Activated CD4-positive, alpha-beta memory T cell treated with anti-CD3 and anti-CD28 coated beads for 36 hours (primary cell): ENCODE measurements at regions of chr5 and their contacts with region 1.

Region 1: DNA sequence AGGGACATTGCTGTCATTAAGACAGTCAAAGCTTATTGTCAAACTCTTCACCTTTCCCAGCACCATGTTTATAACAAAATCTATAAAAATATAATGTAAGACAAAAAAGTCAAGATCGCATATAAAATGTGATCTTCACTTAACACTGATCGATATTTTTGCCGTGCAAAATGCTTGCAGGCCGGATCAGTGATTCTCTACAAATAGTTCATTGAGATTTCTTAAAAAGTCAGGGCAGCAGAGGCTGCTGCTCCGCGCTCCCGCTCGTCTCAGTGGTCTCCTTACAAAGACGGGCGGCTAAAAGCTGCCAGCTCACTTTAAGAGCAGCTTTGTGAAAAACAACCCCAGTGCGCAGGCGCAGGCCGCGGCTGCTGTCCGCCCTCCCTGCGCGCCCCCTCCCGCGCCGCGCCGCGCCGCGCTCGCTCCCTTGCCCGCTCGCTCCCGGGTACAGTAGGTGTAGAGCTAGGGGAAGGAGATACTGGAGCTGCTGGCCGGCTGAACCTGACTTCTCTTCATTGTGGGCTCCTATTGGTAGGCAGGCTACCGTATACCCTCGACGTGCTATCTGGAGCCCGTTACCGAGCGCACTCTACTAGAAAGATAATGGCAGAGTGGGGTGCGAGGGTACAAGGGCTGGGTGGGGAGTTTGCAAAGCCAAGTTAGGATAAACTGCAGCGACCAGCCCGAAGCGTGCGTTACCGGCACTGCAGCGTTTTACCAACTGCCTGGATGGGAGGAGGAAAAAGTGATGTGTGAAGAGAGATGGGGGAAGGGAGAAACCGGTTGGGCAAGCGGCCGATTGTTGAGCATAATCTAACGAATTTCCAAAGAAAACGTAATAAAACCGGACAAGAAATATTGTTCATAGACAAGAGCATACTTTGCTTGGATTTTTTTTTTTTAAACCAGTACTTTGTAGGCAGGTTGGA is at the start of gene ARRDC3:
- DNase-seq: peak; percentile 98
- H3K4me3 Mint-ChIP-seq: peak within 1 kb of the TSS; percentile 86
- H3K27ac Mint-ChIP-seq: peak within 1 kb of the TSS; percentile 100
- H3K4me1 Mint-ChIP-seq: peaks cover 17% of the 10 kb centered on the region
- H3K27me3 Mint-ChIP-seq: no peaks in the 10 kb centered on the region
- total RNA-seq, gene ARRDC3: 17.9 to 19.0 TPM

Region 2: GRCh38 chr5:90866333-90866732 is 517.0 kb before region 1 on chr5:
- CTCF ChIA-PET with region 1: interaction called, 43 read pairs
- POLR2A ChIA-PET with region 1: interaction called, 5 read pairs
- intact Hi-C with region 1: loop called (anchors 1 kb)
- DNase-seq: no peak
- H3K4me3 Mint-ChIP-seq: no peak overlapping the region
- H3K27ac Mint-ChIP-seq: no peak overlapping the region
- H3K4me1 Mint-ChIP-seq: peaks cover 6% of the 10 kb centered on the region
- H3K27me3 Mint-ChIP-seq: peaks cover 14% of the 10 kb centered on the region

Region 3: DNA sequence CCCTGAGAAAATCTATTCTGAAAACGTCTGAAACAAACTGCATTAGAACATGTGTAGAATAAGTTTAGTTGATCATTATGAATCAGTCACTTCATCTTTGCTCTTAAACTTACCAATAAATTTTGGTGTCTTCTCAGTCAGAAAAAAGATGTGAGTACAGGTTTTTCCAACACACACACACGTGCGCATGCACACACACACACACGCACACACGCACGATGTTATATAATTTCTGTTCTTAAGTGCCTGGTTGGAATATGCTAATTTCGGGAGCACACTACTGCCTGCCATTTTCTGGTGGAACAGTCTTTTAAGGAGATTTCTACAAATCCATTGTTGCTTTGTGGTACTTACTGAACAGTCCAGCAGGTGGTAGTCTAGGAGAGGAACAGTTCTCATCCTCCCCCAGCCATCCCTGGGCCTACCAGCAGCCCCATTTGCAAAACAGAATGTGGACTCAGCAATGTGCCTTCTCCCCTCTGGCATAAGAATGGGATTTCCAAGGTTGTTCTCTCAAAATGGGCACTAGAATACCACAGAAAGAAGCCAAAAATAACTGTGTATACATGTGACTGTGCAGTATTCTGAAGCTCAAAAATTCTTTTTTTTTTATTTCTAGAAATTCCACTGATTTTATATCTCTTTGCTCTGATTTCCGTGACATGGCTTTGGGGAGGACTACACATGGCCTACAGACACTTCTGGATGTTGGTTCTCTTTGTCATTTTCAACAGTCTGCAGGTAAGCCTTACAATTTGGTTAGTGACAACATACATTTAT is 281.5 kb before region 1 on chr5:
- CTCF ChIA-PET with region 1: interaction called, 55 read pairs
- POLR2A ChIA-PET with region 1: no interaction called
- intact Hi-C with region 1: loop called (anchors 1 kb)
- DNase-seq: peak; percentile 61
- H3K4me3 Mint-ChIP-seq: no peak overlapping the region
- H3K27ac Mint-ChIP-seq: no peak overlapping the region
- H3K4me1 Mint-ChIP-seq: no peaks in the 10 kb centered on the region
- H3K27me3 Mint-ChIP-seq: peaks cover 2% of the 10 kb centered on the region

Region 4: GRCh38 chr5:91219803-91220371 is 163.4 kb before region 1 on chr5:
- CTCF ChIA-PET with region 1: interaction called, 226 read pairs
- POLR2A ChIA-PET with region 1: interaction called, 6 read pairs
- intact Hi-C with region 1: loop called (anchors 1 kb)
- DNase-seq: peak; percentile 50
- H3K4me3 Mint-ChIP-seq: no peak overlapping the region
- H3K27ac Mint-ChIP-seq: no peak overlapping the region
- H3K4me1 Mint-ChIP-seq: no peaks in the 10 kb centered on the region
- H3K27me3 Mint-ChIP-seq: peaks cover 2% of the 10 kb centered on the region

Region 5: GRCh38 chr5:91260707-91261106 is 122.6 kb before region 1 on chr5:
- CTCF ChIA-PET with region 1: interaction called, 10 read pairs
- POLR2A ChIA-PET with region 1: no interaction called
- intact Hi-C with region 1: loop called (anchors 5 kb)
- DNase-seq: no peak
- H3K4me3 Mint-ChIP-seq: no peak overlapping the region
- H3K27ac Mint-ChIP-seq: no peak overlapping the region
- H3K4me1 Mint-ChIP-seq: no peaks in the 10 kb centered on the region
- H3K27me3 Mint-ChIP-seq: no peaks in the 10 kb centered on the region

Region 6: DNA sequence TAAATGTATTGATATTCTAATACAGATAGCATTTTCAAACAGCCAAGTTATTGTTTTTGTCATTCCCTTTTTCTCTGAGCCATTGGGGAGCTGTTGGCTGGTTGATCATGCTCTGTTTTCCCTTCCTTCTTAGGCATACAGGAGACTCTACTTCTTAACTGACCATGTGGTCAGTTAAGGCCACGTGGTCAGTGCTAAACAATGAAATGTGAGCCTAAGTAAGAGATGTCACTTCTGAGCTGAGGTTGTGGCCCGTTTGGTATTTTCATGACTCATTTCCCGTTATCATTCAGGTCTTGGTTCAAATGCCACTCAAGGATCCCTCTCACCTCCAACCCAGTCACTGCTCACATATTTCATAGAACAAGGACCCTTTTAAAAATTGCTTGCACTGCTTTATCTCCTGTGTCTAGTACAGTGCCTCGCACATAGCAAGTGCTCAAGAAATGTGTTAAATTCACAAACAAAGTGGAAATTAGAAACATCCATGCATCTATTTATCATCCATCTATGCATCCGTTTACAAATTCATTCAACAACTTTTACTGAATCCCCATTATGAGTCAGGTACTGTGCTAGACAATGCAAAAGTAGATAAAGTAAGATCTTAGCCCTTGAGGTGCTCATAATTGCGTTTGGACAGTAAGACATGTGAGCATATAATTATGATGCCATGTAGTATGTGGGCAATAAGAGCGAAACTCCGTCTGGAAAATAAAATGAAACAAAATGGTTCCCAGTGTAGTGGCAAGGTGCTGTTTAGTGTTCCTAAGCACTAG is 50.8 kb before region 1 on chr5:
- CTCF ChIA-PET with region 1: interaction called, 4 read pairs
- POLR2A ChIA-PET with region 1: interaction called, 6 read pairs
- intact Hi-C with region 1: loop called (anchors 1 kb)
- DNase-seq: peak; percentile 41
- H3K4me3 Mint-ChIP-seq: no peak overlapping the region
- H3K27ac Mint-ChIP-seq: no peak overlapping the region
- H3K4me1 Mint-ChIP-seq: peaks cover 15% of the 10 kb centered on the region
- H3K27me3 Mint-ChIP-seq: no peaks in the 10 kb centered on the region